ENCODE measurements at regions of chr21 and their contacts with region 1.

Region 1: DNA sequence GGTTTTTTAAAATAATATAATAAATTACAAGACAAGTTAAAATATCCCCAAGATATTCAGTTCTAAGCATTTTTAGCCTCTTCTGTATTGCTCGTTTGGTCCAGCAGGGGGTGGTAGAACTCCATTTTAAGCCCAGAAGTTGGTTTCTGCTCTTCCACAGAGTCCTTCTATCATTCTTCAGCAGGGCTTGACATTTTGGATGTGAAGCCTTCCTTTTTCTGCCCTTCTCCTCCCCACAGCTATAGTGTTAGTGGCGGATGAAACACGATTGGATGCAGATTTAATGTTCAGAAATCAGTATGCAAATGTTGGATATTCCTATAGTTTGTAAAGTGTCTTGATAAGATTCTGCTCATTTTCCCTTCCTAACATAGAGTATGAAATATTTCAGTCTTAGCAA is 1.4 kb downstream of the NCAM2 start:
- DNase-seq: peak; percentile 47 to 70 (median 56)
- ATAC-seq: peak; percentile 73
- H3K4me3 ChIP-seq: no peak overlapping the region
- H3K27ac ChIP-seq: no peak overlapping the region
- H3K4me1 ChIP-seq: peaks cover 0 to 16% of the 10 kb centered on the region in 2 experiments; a peak in 3 of 5 replicates
- H3K27me3 ChIP-seq: peaks cover 0 to 7% of the 10 kb centered on the region in 2 experiments; a peak in 1 of 5 replicates
- CTCF ChIP-seq: peak; percentile 68 to 88 (median 80)
- EP300 ChIP-seq: no peak
- POLR2A ChIP-seq: no peak
- RAD21 ChIP-seq: peak; percentile 82 to 91

Region 2: DNA sequence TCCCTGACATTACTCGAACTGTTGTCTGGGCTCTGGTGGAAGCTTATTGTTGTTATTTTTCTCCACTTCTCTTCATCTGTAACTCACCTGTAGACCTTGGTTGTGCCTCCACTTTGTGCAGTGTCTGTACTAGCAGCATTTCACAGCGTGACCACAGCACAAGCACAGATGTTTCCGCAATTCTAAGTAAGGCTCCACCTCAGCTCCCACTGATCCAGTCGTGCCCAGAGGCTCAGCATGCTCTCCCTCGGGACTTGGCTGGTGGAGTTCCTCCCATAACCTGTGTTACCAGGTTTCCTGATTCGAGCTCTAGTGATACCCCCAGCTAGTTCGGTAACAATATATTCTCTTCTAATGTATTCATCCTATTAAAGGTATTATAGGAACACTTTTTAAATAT is 20.7 kb after region 1 on chr21:
- CTCF ChIA-PET with region 1: no interaction called
- POLR2A ChIA-PET with region 1: no interaction called
- in situ Hi-C with region 1: no loop called
- intact Hi-C with region 1: no loop called
- DNase-seq: no peak
- ATAC-seq: peak; percentile 55
- H3K4me3 ChIP-seq: no peak overlapping the region
- H3K27ac ChIP-seq: no peak overlapping the region
- H3K4me1 ChIP-seq: no peaks in the 10 kb centered on the region; a peak in 2 of 5 replicates
- H3K27me3 ChIP-seq: no peaks in the 10 kb centered on the region
- CTCF ChIP-seq: no peak
- EP300 ChIP-seq: no peak
- POLR2A ChIP-seq: no peak
- RAD21 ChIP-seq: no peak

Region 3: DNA sequence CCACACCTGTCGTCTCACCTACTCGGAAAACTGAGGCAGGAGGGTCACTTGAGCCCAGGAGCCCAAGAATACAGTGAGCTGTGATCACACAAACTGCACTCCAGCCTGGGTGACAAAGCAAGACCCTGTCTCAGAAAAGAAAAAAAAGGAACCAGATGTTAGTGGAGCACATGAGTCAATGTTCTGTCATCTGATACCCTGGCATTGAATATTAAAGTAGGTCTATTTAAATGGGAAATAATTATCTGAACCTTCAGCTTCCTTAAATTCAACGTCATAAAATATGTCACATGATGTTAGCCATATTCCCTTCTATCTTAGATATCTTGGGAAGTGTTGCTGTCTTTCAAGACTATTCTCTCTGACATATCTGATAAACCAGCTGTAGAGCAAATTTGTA is 45.9 kb after region 1 on chr21:
- CTCF ChIA-PET with region 1: no interaction called
- POLR2A ChIA-PET with region 1: no interaction called
- in situ Hi-C with region 1: no loop called
- intact Hi-C with region 1: no loop called
- DNase-seq: no peak
- ATAC-seq: no peak; the same call in 2 of the 3 replicates
- H3K4me3 ChIP-seq: no peak overlapping the region
- H3K27ac ChIP-seq: no peak overlapping the region; the same call in 2 of the 3 replicates
- H3K4me1 ChIP-seq: peaks cover 0 to 4% of the 10 kb centered on the region in 2 experiments; a peak in 2 of 5 replicates
- H3K27me3 ChIP-seq: no peaks in the 10 kb centered on the region
- CTCF ChIP-seq: no peak
- EP300 ChIP-seq: no peak
- POLR2A ChIP-seq: no peak
- RAD21 ChIP-seq: no peak

Region 4: DNA sequence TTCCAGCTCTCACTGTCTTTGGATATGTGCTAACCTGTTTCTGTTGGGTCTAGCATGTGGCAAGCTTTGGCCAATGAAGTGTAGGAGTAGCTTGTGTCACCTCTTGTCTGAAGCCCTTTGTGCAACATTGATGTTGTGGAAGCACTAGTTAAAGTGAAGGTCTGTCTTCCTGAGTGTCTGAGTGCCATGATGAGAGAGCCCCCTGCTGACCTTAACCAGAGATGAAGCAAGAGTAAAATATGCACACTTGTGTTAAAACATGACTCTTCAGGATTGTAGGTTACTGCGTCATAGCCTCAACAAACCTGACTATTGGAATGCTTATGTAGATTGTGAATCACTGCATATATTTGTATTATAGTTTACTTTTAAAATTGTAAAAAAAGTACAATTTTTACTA is 102.3 kb after region 1 on chr21:
- CTCF ChIA-PET with region 1: interaction called, 13 read pairs
- POLR2A ChIA-PET with region 1: no interaction called
- in situ Hi-C with region 1: loop called (anchors 10 kb)
- intact Hi-C with region 1: loop called (anchors 1 kb)
- DNase-seq: peak; percentile 10 to 66 (median 18)
- ATAC-seq: peak; percentile 93
- H3K4me3 ChIP-seq: no peak overlapping the region
- H3K27ac ChIP-seq: no peak overlapping the region
- H3K4me1 ChIP-seq: no peaks in the 10 kb centered on the region
- H3K27me3 ChIP-seq: no peaks in the 10 kb centered on the region
- CTCF ChIP-seq: peak; percentile 56 to 70 (median 62)
- EP300 ChIP-seq: no peak
- POLR2A ChIP-seq: no peak
- RAD21 ChIP-seq: peak; percentile 48 to 76

Region 5: GRCh38 chr21:21373969-21374368 is 374.3 kb after region 1 on chr21:
- CTCF ChIA-PET with region 1: interaction called, 9 read pairs
- POLR2A ChIA-PET with region 1: no interaction called
- in situ Hi-C with region 1: no loop called
- intact Hi-C with region 1: loop called (anchors 5 kb)
- DNase-seq: no peak
- ATAC-seq: peak; percentile 67
- H3K4me3 ChIP-seq: no peak overlapping the region
- H3K27ac ChIP-seq: no peak overlapping the region; the same call in 2 of the 3 replicates
- H3K4me1 ChIP-seq: no peaks in the 10 kb centered on the region
- H3K27me3 ChIP-seq: no peaks in the 10 kb centered on the region
- CTCF ChIP-seq: peak in 2 of 3 experiments; percentile 4 to 49; a peak in 3 of 6 replicates
- EP300 ChIP-seq: no peak
- POLR2A ChIP-seq: no peak
- RAD21 ChIP-seq: no peak; a peak in 2 of 4 replicates

Region 6: GRCh38 chr21:21688875-21689274 is 689.2 kb after region 1 on chr21:
- CTCF ChIA-PET with region 1: interaction called, 7 read pairs
- POLR2A ChIA-PET with region 1: no interaction called
- in situ Hi-C with region 1: loop called (anchors 25 kb)
- intact Hi-C with region 1: loop called (anchors 5 kb)
- DNase-seq: peak in 2 of 4 experiments; percentile 5 to 23
- ATAC-seq: peak; percentile 78
- H3K4me3 ChIP-seq: no peak overlapping the region
- H3K27ac ChIP-seq: no peak overlapping the region
- H3K4me1 ChIP-seq: no peaks in the 10 kb centered on the region
- H3K27me3 ChIP-seq: no peaks in the 10 kb centered on the region
- CTCF ChIP-seq: peak; percentile 27 to 48 (median 30); a peak in 3 of 6 replicates
- EP300 ChIP-seq: no peak
- POLR2A ChIP-seq: no peak
- RAD21 ChIP-seq: peak; percentile 44 to 55

Region 7: GRCh38 chr21:21921421-21922232 is 922.0 kb after region 1 on chr21:
- CTCF ChIA-PET with region 1: interaction called, 3 read pairs
- POLR2A ChIA-PET with region 1: no interaction called
- in situ Hi-C with region 1: loop called (anchors 25 kb)
- intact Hi-C with region 1: loop called (anchors 5 kb)
- DNase-seq: peak; percentile 8 to 26 (median 12)
- ATAC-seq: no peak
- H3K4me3 ChIP-seq: no peak overlapping the region
- H3K27ac ChIP-seq: no peak overlapping the region
- H3K4me1 ChIP-seq: no peaks in the 10 kb centered on the region
- H3K27me3 ChIP-seq: no peaks in the 10 kb centered on the region
- CTCF ChIP-seq: peak; percentile 21 to 45 (median 33); a peak in 4 of 6 replicates
- EP300 ChIP-seq: no peak
- POLR2A ChIP-seq: no peak
- RAD21 ChIP-seq: peak; percentile 24 to 61

Region 8: DNA sequence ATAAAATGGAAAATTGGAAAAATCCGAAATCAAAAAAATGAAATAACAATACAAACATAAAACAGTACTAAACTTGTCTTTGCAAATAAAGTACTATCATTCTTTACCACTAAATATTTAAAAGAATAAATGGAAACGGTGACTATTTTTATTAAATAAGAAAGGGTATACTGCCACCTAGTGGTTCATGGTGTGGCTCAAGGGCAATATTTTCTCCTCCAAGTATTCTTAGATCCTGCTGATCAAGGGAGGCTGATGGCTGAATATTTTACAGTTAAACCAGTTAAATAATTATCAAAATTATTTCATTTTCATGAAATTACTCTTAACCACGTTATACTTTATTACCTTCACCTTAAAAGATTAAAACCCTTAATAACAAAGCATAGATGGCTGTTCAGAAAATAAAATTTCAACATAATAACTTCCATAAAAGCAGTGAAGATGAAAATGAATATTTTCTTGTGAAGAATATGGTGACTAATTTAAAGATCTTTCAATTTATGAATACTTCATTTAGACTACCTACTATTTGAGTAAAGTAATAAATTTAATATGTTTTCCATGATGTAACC is 1792.4 kb after region 1 on chr21:
- CTCF ChIA-PET with region 1: interaction called, 10 read pairs
- POLR2A ChIA-PET with region 1: no interaction called
- in situ Hi-C with region 1: loop called (anchors 25 kb)
- intact Hi-C with region 1: loop called (anchors 1 kb)
- DNase-seq: peak; percentile 37 to 47 (median 47)
- ATAC-seq: peak; percentile 66
- H3K4me3 ChIP-seq: no peak overlapping the region
- H3K27ac ChIP-seq: no peak overlapping the region
- H3K4me1 ChIP-seq: no peaks in the 10 kb centered on the region
- H3K27me3 ChIP-seq: no peaks in the 10 kb centered on the region
- CTCF ChIP-seq: peak; percentile 32 to 69 (median 37); a peak in 4 of 6 replicates
- EP300 ChIP-seq: no peak
- POLR2A ChIP-seq: no peak
- RAD21 ChIP-seq: peak; percentile 73 to 74